ENCODE measurements at regions of chr4 and their contacts with region 1.

Region 1: DNA sequence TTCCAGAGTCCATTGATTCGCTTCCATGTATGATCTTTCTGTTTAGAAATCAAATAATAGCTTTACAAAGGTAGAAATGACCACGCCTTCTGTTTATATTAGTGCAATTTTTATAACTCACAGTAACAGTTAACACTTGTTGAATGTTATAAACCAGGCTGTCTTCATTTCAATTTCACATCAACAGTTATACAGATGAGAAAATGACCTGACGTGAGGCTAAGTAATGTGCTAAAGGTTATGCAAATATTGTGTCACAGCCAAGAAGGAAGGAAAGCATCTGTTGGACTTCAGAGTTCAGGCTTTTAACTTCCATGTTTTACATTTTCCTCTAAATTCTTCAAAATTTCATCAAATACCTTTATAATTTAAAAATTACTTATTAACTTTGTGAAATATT is 13.9 kb downstream of the CASP3 start:
- DNase-seq: no peak
- ATAC-seq: no peak
- H3K4me3 ChIP-seq: no peak overlapping the region
- H3K4me3 Mint-ChIP-seq: no peak overlapping the region
- H3K27ac ChIP-seq: no peak overlapping the region
- H3K27ac Mint-ChIP-seq: no peak overlapping the region
- H3K4me1 ChIP-seq: no peaks in the 10 kb centered on the region
- H3K4me1 Mint-ChIP-seq: peaks cover 18 to 24% (median 20%) of the 10 kb centered on the region in 3 donors
- H3K27me3 ChIP-seq: no peaks in the 10 kb centered on the region
- H3K27me3 Mint-ChIP-seq: no peaks in the 10 kb centered on the region

Region 2: GRCh38 chr4:183996868-183997267 is 638.5 kb before region 1 on chr4:
- CTCF ChIA-PET with region 1: no interaction called
- POLR2A ChIA-PET with region 1: no interaction called
- DNase-seq: no peak
- ATAC-seq: no peak
- H3K4me3 ChIP-seq: no peak overlapping the region
- H3K4me3 Mint-ChIP-seq: no peak overlapping the region
- H3K27ac ChIP-seq: no peak overlapping the region
- H3K27ac Mint-ChIP-seq: no peak overlapping the region
- H3K4me1 ChIP-seq: no peaks in the 10 kb centered on the region
- H3K4me1 Mint-ChIP-seq: no peaks in the 10 kb centered on the region
- H3K27me3 ChIP-seq: peaks cover 0 to 11% of the 10 kb centered on the region in 2 experiments
- H3K27me3 Mint-ChIP-seq: peaks cover 12 to 14% of the 10 kb centered on the region in 2 donors

Region 3: DNA sequence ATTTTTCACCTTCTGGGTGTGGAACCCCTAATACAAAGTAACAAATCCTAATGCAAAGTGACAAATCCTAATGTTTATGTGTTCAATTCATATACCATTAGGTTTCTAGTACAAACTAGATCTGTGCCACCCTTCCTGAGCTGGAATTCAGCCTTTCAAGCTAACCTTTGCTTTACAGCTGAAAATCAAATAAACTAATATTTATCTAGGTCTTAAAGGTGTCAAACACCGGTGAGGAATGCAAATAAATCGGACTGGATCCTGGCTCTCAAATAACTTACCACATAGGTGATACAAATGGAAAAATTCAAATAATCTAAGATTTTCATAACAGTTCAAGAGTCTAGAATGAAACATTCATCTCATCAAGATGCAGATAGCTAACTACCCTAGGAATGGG is 172.7 kb before region 1 on chr4:
- CTCF ChIA-PET with region 1: no interaction called
- POLR2A ChIA-PET with region 1: interaction called in 1 of 2 experiments, 10 read pairs
- DNase-seq: no peak
- ATAC-seq: no peak
- H3K4me3 ChIP-seq: no peak overlapping the region
- H3K4me3 Mint-ChIP-seq: no peak overlapping the region
- H3K27ac ChIP-seq: no peak overlapping the region
- H3K27ac Mint-ChIP-seq: peak overlapping the region; percentile 44 to 60
- H3K4me1 ChIP-seq: peaks cover 8 to 9% of the 10 kb centered on the region in 2 experiments
- H3K4me1 Mint-ChIP-seq: peaks cover 90 to 95% (median 91%) of the 10 kb centered on the region in 3 donors
- H3K27me3 ChIP-seq: no peaks in the 10 kb centered on the region
- H3K27me3 Mint-ChIP-seq: no peaks in the 10 kb centered on the region

Measured in T-cell (primary cell).